ENCODE measurements at regions of chr3 and their contacts with region 1.

Region 1: GRCh38 chr3:153161138-153161713 is 800 bp upstream of the RAP2B start:
- DNase-seq: peak; percentile 94
- ATAC-seq: peak; percentile 95

Region 2: GRCh38 chr3:153130312-153130990 is 30.8 kb before region 1 on chr3:
- intact Hi-C with region 1: no loop called
- DNase-seq: no peak
- ATAC-seq: no peak

Region 3: GRCh38 chr3:153284282-153284938 is 123.2 kb after region 1 on chr3:
- intact Hi-C with region 1: loop called (anchors 2 kb)
- DNase-seq: no peak
- ATAC-seq: peak; percentile 78

Region 4: DNA sequence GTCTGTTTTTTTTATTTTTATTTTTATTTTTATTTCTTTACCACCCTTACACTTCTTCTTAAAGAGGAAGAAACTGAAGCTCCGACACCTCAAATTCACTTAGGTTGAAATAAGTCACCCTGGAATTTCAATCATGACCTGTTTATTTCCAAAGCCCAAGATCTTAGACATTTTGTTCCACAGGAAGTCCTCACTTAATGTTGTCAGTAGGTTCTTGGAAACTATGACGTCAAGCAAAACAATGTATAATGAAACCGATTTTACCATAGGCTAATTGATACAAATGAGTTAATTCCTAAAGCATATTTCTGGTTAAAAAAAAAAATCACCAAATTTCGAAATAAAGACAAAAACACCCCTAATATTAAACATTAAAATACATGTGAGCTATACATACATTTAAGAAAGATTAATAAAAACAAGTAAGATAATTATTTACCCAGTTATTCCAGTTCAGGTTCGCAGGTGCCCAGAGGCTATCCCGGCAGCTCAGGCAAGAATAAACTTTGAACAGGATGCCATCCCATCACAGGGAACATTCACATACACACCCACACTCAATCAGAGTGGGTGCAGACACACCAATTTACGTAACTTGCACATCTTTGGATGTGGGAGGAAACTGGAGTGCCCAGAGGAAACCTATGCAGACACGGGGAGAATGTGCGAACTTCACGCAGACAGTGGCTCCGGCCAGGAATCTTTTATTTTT is 391.8 kb after region 1 on chr3:
- intact Hi-C with region 1: loop called (anchors 5 kb)
- DNase-seq: no peak
- ATAC-seq: no peak

Region 5: GRCh38 chr3:154316974-154317767 is 1155.9 kb after region 1 on chr3:
- intact Hi-C with region 1: loop called (anchors 5 kb)
- DNase-seq: no peak
- ATAC-seq: no peak

Measured in Right ventricle myocardium inferior (tissue), 1 donor.